GM18951 (cell line): ENCODE measurements at regions of chrX and their contacts with region 1.

Region 1: DNA sequence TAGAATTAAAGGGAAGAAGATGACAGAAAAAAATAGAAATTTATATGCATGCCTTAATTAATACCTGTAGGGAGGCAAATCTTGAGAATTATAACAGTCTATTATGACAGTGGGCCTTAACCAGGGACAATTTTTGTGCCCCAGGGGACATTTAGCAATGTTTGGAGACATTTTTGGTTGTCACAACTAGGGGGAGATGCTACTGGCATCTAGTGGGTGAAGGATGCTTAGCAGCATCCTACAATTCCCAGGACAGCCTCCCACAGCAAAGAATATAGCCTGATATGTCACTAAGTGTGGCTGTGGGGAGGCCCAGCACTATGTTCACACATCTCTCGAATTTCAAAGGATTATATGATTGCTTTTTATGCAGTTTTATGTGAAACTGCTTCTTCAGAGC is 10.5 kb downstream of the GPR82 start:
- POLR2A ChIP-seq: no peak

Region 2: DNA sequence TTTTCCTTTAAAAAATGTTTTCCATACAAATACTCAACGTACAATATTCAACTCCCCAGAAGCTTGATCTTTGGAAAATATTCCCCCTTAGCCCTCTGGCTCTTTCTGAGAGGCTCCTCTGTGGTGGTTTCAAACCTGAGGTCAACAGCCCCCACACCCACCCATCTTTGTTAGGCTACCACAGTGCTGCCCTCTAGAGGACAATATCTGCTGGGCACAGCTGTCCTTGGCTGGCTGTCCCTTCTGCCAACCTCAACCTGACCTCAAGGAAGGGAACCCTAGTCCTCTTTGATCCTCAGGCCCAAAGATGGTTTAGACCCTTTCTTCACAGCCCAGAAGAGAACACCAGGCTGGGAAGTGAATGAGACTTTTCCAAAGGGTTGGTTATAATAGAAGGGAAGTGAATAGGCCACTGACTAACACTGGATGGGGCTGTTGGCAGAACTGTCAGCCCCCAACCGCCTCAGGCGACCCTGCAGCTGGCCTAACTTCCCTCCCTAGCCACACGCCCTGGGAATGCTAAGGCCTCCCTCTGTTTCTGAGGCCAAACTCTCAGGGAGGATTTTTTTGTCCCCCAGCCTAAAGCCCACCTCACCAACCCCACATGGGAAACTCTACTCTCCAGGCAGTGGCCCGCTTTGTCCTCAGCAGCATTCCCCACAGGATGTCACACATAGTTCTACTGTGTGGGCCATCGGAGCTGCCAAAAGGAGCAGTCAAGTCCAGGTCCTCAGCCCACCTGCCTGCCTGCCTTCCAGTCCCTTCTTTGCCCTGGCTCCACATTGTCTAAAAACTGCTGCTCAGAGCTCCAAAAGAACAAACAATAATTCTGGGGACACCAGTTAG is 253.0 kb before region 1 on chrX:
- in situ Hi-C with region 1: no loop called
- POLR2A ChIP-seq: no peak

Region 3: GRCh38 chrX:41561045-41561444 is 173.5 kb before region 1 on chrX:
- in situ Hi-C with region 1: loop called (anchors 25 kb)
- POLR2A ChIP-seq: no peak